IMR-90 (cell line): ENCODE measurements at regions of chr10 and their contacts with region 1.

Region 1: DNA sequence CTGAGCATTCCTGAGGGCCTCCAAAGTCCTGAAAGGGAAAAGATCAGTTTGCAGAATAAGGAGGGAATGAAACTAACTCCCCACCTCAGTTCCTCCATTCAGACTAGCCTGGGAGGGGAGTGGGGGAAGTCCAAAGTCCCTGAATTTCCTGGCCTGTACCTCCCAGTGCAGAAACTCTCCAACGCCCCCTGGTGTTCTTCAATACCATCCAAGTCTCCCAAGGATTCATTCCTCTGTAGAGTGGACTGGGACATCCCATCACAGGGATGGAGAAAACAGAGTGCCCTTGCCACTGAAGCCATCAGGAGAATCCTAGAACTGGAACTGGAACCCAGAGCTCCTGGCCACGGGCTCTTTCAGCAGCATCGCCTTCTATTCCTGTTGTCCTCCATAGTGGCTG is 1.6 kb upstream of the COL13A1 start:
- DNase-seq: peak; percentile 75
- ATAC-seq: peak; percentile 48
- H3K4me3 ChIP-seq: no peak overlapping the region
- H3K27ac ChIP-seq: no peak overlapping the region
- H3K4me1 ChIP-seq: peaks cover 12% of the 10 kb centered on the region
- H3K27me3 ChIP-seq: peaks cover 3% of the 10 kb centered on the region; the same call in 1 of the 2 replicates
- CTCF ChIP-seq: peak; percentile 86
- POLR2A ChIP-seq: no peak
- RAD21 ChIP-seq: peak; percentile 73

Region 2: GRCh38 chr10:69515699-69516259 is 284.3 kb before region 1 on chr10:
- CTCF ChIA-PET with region 1: no interaction called
- POLR2A ChIA-PET with region 1: no interaction called
- dilution Hi-C with region 1: no loop called
- in situ Hi-C with region 1: no loop called
- intact Hi-C with region 1: loop called (anchors 5 kb)
- DNase-seq: peak; percentile 55
- ATAC-seq: peak; percentile 99
- H3K4me3 ChIP-seq: no peak overlapping the region
- H3K27ac ChIP-seq: no peak overlapping the region
- H3K4me1 ChIP-seq: no peaks in the 10 kb centered on the region
- H3K27me3 ChIP-seq: peaks cover 24% of the 10 kb centered on the region
- CTCF ChIP-seq: peak; percentile 83
- POLR2A ChIP-seq: no peak
- RAD21 ChIP-seq: peak; percentile 89

Region 3: DNA sequence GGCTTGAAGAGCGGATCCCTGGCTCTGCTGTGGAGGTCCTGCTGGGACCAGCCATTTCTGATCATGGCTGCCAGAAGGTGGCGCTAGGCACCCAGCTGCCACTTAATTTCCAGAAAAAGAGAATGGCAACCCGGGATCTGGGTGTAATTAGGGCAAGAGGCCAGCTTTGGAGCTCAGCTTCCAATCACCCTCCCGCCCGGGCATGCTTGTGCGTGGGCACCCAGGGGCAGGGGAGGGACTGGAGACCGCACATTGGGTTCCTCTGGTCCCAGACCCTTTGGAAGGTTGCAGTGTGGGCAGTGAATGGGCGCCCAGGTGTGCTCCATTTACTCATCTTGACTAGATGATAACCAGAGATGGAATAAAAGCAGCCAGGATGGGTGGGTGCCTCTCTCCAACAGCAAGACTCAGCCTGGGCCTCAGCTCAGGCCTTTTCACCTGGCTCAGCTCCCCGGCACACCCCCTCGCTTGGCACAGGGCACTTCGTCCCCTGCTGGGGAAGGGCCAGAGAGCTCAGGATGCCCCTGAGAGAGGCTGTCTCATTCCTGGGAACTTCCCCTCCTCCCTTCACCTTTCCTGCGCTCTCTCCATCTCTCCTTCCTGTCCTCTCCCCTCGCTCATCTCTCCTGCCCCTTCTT is 155.3 kb before region 1 on chr10:
- CTCF ChIA-PET with region 1: interaction called, 4 read pairs
- POLR2A ChIA-PET with region 1: interaction called, 5 read pairs
- dilution Hi-C with region 1: no loop called
- in situ Hi-C with region 1: loop called (anchors 10 kb)
- intact Hi-C with region 1: loop called (anchors 1 kb)
- DNase-seq: peak; percentile 41
- ATAC-seq: peak; percentile 86
- H3K4me3 ChIP-seq: no peak overlapping the region
- H3K27ac ChIP-seq: no peak overlapping the region
- H3K4me1 ChIP-seq: no peaks in the 10 kb centered on the region; the same call in 1 of the 2 replicates
- H3K27me3 ChIP-seq: peaks cover 57% of the 10 kb centered on the region
- CTCF ChIP-seq: peak; percentile 91
- POLR2A ChIP-seq: no peak
- RAD21 ChIP-seq: peak; percentile 94

Region 4: GRCh38 chr10:69742928-69743602 is 57.0 kb before region 1 on chr10:
- CTCF ChIA-PET with region 1: interaction called, 6 read pairs
- POLR2A ChIA-PET with region 1: no interaction called
- dilution Hi-C with region 1: no loop called
- in situ Hi-C with region 1: no loop called
- intact Hi-C with region 1: loop called (anchors 2 kb)
- DNase-seq: peak; percentile 19
- ATAC-seq: peak; percentile 30; the same call in 1 of the 2 replicates
- H3K4me3 ChIP-seq: no peak overlapping the region
- H3K27ac ChIP-seq: no peak overlapping the region
- H3K4me1 ChIP-seq: peaks cover 7% of the 10 kb centered on the region; the same call in 1 of the 2 replicates
- H3K27me3 ChIP-seq: peaks cover 3% of the 10 kb centered on the region; the same call in 1 of the 2 replicates
- CTCF ChIP-seq: peak; percentile 55
- POLR2A ChIP-seq: no peak
- RAD21 ChIP-seq: peak; percentile 57

Region 5: DNA sequence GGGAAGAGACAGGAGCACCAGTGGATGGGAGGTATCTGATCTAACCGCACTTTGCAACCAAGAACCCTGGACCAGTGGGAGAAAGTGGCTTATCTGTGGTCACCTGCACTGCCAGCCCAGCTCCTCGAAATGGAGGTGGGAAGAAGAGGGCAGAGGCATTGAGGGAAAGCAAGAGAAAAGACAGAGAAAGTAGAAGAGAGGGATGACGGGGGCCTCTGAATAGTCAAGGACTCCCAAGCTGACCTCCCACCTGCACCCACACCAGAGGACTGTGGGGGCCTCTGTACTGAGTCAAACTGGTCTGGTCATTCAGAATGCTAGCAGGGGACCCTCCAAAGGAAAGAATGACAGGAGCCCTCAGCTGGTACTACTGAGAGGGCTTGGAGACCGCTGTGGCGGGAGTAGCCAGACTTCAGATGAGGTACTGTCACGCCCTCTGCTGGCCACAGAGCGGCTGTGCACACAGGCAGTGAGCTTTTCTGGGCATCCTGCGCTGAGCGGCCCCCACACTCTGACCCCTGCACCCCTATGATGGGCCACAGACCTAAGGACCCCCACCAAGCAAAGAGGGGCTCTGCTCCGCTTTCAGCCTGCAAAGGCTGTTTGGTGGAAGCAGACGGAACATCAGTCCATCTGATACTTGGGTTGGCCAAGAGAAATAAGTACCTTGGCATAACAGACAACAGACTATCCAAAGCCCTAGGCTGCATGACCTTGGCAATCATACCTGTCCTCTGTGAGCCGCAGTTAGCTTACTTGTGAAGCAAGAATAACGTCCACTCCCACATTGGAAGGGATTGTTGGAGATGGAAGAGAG is 114.5 kb after region 1 on chr10:
- CTCF ChIA-PET with region 1: interaction called, 6 read pairs
- POLR2A ChIA-PET with region 1: no interaction called
- dilution Hi-C with region 1: no loop called
- in situ Hi-C with region 1: no loop called
- intact Hi-C with region 1: loop called (anchors 1 kb)
- DNase-seq: peak; percentile 65
- ATAC-seq: peak; percentile 99
- H3K4me3 ChIP-seq: no peak overlapping the region
- H3K27ac ChIP-seq: no peak overlapping the region
- H3K4me1 ChIP-seq: no peaks in the 10 kb centered on the region; the same call in 1 of the 2 replicates
- H3K27me3 ChIP-seq: no peaks in the 10 kb centered on the region
- CTCF ChIP-seq: peak; percentile 92
- POLR2A ChIP-seq: no peak
- RAD21 ChIP-seq: peak; percentile 92